ENCODE measurements at regions of chr14 and their contacts with region 1.

Region 1: DNA sequence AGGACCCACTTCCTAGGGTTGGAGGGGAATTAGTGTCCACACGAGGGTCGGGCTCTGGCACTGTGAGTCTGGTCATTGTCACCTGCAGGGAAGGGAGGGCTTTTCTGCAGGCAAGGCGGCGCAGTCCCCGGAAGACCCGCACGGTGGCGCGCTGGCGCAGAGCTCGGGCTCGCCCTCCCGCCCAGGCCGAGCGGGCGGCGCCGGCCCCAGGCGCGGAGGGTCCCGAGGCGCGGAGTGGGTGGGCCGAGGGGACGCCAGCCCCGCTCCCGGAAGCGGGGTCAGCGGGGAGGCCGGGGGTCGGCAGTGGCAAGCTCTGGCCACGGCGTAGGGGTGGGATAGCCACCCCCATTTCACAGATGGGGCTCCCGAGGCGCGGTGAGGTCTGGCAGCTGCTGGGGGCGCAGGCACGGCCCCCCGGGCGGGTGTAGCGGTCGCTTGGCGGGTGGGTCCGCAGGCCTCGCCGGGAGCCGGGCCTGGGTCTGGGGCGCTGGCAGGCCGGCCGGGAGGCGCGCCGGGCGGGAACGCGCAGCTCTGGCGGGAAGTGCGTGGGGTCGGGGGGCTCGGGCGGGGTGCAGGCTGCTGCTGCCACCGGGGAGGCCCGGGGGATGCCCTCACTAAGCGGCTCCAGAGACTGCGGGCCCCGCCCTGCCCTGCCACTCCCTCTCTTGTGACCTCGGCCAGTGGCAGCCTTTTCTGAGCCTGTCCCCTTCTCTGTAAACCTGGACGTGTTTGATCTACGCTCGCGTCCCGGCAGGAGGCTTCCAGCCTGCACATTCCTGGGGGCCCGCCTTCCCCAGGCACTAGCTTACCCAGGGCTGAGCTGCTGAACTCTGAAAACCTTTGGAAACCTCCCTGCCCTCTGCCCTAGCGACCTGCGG is 46.1 kb downstream of the CYP46A1 start:
- DNase-seq: peak; percentile 93
- H3K4me3 Mint-ChIP-seq: peak overlapping the region; percentile 53
- H3K27ac Mint-ChIP-seq: no peak overlapping the region
- H3K4me1 Mint-ChIP-seq: no peaks in the 10 kb centered on the region
- H3K27me3 Mint-ChIP-seq: peaks cover 11% of the 10 kb centered on the region

Region 2: GRCh38 chr14:99768381-99768780 is 38.2 kb after region 1 on chr14:
- intact Hi-C with region 1: no loop called
- DNase-seq: no peak
- H3K4me3 Mint-ChIP-seq: no peak overlapping the region
- H3K27ac Mint-ChIP-seq: no peak overlapping the region
- H3K4me1 Mint-ChIP-seq: peaks cover 3% of the 10 kb centered on the region
- H3K27me3 Mint-ChIP-seq: no peaks in the 10 kb centered on the region

Region 3: DNA sequence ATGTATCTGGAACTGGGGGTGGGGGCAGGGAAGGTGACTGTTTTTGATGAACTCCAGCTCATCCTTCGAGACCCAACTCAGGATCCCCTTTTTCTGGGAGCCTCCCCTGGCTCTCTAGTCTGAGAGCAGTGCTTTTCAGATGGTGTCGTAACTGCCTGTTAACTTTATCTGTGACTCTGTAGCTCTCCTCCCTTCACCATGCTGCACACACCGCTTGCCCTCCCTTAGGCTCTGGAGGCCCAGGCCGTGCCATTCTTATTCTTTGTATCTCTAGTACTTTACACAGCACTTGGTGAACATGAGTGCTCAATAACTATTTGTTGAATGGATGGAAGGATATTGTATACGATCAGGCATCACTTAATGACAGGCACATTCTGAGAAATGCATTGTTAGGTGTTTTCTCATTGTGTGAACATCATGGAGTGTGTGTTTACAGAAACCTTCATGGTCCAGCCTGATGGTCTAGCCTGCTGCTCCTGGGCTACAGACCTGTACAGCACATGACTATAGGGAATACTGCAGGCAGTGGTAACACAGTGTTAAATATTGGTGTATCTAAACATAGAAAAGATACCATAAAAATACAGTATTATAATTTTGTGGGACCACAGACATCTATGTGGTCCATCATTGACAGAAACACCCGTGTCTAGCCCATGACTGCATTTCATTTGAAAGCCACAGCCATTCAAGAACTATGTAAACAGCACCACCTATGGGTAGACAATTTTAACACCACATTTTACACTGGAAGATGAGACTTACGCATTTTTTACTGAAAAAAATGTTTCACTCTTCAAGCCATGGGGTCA is 154.8 kb after region 1 on chr14:
- intact Hi-C with region 1: loop called (anchors 1 kb)
- DNase-seq: peak; percentile 79
- H3K4me3 Mint-ChIP-seq: no peak overlapping the region
- H3K27ac Mint-ChIP-seq: no peak overlapping the region
- H3K4me1 Mint-ChIP-seq: no peaks in the 10 kb centered on the region
- H3K27me3 Mint-ChIP-seq: peaks cover 5% of the 10 kb centered on the region

Measured in activated CD4-positive, alpha-beta T cell treated with anti-CD3 and anti-CD28 coated beads, Interleukin-2, amount 10 ng/mL, durations not matched to agents 24 days and 14 days (primary cell).